K562 (cell line): ENCODE measurements at regions of chr1 and their contacts with region 1.

Region 1: GRCh38 chr1:159780583-159781582 is at the start of gene DUSP23:
- DNase-seq: peak; percentile 95 to 99 (median 98)
- ATAC-seq: peak; percentile 100
- H3K4me3 ChIP-seq: peak within 1 kb of the TSS; percentile 46
- H3K27ac ChIP-seq: peak within 1 kb of the TSS; percentile 58
- H3K4me1 ChIP-seq: peaks cover 0 to 17% of the 10 kb centered on the region in 2 experiments; a peak in 3 of 5 replicates
- H3K27me3 ChIP-seq: peaks cover 0 to 3% of the 10 kb centered on the region in 2 experiments; a peak in 1 of 5 replicates
- CTCF ChIP-seq: peak; percentile 94 to 98 (median 97)
- EP300 ChIP-seq: no peak
- POLR2A ChIP-seq: peak; percentile 68
- RAD21 ChIP-seq: peak; percentile 91 to 92
- polyA plus RNA-seq, gene DUSP23: 1.0 to 3.0 TPM

Region 2: DNA sequence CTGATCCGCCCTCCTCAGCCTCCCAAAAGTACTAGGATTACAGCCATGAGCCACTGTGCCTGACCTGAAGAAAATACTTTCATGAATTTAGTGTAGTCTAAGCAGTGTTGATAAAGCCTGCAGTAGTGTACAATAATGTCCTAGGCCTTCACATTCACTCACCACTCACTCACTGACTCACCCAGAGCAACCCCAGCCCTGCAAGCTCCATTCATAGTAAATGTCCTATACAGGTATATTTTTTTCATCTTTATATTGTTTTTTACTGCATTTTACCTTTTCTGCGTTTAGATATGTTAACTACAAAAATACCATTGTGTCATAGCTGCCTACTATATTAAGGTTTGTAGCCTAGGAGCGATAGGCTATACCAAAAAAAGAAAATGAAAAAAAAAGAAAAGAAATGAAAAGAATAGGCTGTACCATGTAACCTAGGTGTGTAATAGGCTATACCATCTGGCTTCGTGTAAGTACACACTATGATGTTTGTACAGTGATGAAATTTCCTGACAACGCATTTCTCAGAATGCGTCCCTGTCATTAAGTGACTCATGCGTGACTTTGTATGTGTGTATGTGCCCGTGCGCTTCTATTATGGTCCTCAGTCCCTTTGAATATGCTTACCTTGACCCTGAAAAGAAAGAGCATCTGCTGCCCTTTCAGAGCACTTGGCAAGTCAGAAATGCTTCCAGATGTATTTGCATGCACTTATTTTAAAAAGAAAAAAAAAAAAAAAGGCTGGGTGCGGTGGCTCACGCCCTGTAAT is 36.6 kb after region 1 on chr1:
- CTCF ChIA-PET with region 1: interaction called, 4 read pairs
- POLR2A ChIA-PET with region 1: no interaction called
- in situ Hi-C with region 1: no loop called
- intact Hi-C with region 1: loop called (anchors 5 kb)
- DNase-seq: peak in 2 of 4 experiments; percentile 22 to 57
- ATAC-seq: peak; percentile 89
- H3K4me3 ChIP-seq: no peak overlapping the region
- H3K27ac ChIP-seq: no peak overlapping the region
- H3K4me1 ChIP-seq: peaks cover 0 to 9% of the 10 kb centered on the region in 2 experiments; a peak in 2 of 5 replicates
- H3K27me3 ChIP-seq: peaks cover 0 to 18% of the 10 kb centered on the region in 2 experiments; a peak in 4 of 5 replicates
- CTCF ChIP-seq: no peak
- EP300 ChIP-seq: peak; percentile 69
- POLR2A ChIP-seq: no peak
- RAD21 ChIP-seq: no peak

Region 3: GRCh38 chr1:159891275-159892157 is 110.6 kb after region 1 on chr1:
- CTCF ChIA-PET with region 1: interaction called, 12 read pairs
- POLR2A ChIA-PET with region 1: interaction called, 3 read pairs
- in situ Hi-C with region 1: no loop called
- intact Hi-C with region 1: loop called (anchors 5 kb)
- DNase-seq: peak in 1 of 4 experiments; percentile 54
- ATAC-seq: peak; percentile 48
- H3K4me3 ChIP-seq: no peak overlapping the region
- H3K27ac ChIP-seq: no peak overlapping the region
- H3K4me1 ChIP-seq: peaks cover 4 to 24% of the 10 kb centered on the region in 2 experiments; a peak in 4 of 5 replicates
- H3K27me3 ChIP-seq: 0 out of 5 replicates have a peak, but pooled peaks cover 0 to 4% of the 10 kb centered on the region in 2 experiments
- CTCF ChIP-seq: peak; percentile 84 to 99 (median 98)
- EP300 ChIP-seq: no peak
- POLR2A ChIP-seq: no peak
- RAD21 ChIP-seq: peak; percentile 91 to 93

Region 4: GRCh38 chr1:159945483-159946241 is 164.8 kb after region 1 on chr1 and contains the start of gene IGSF9:
- CTCF ChIA-PET with region 1: interaction called, 5 read pairs
- POLR2A ChIA-PET with region 1: no interaction called
- in situ Hi-C with region 1: no loop called
- intact Hi-C with region 1: loop called (anchors 5 kb)
- DNase-seq: peak; percentile 89 to 90 (median 89)
- ATAC-seq: peak; percentile 98
- H3K4me3 ChIP-seq: peak within 1 kb of the TSS; percentile 36
- H3K27ac ChIP-seq: no peak within 1 kb of the TSS
- H3K4me1 ChIP-seq: peaks cover 5 to 13% of the 10 kb centered on the region in 2 experiments; a peak in 3 of 5 replicates
- H3K27me3 ChIP-seq: peaks cover 0 to 38% of the 10 kb centered on the region in 2 experiments; a peak in 4 of 5 replicates
- CTCF ChIP-seq: peak; percentile 63 to 78 (median 72)
- EP300 ChIP-seq: no peak
- POLR2A ChIP-seq: no peak
- RAD21 ChIP-seq: peak; percentile 70 to 75
- polyA plus RNA-seq, gene IGSF9: 0.04 TPM in 1 of 2 experiments, not detected in the other

Region 5: DNA sequence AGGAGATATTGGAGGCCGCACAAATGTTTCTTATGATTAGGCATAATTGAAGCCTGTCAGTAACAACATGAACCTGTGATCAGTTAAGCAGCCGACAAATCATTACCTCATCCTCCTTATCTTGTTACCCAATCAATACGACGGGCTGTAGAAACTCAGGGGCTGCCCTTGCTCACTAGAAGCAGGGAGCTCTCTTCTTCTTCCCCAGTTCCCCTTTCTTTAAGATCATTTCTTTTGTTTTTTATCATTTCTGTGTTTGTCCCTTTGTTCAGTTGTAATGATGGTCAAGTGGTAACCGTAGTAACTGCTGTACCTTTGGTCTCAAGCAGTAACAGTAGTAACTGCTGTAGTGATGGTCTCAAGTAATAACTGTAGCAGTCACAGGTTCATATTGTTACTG is 1710.6 kb after region 1 on chr1:
- CTCF ChIA-PET with region 1: no interaction called
- POLR2A ChIA-PET with region 1: no interaction called
- in situ Hi-C with region 1: no loop called
- intact Hi-C with region 1: no loop called
- DNase-seq: peak in 2 of 4 experiments; percentile 39 to 45
- ATAC-seq: no peak
- H3K4me3 ChIP-seq: no peak overlapping the region
- H3K27ac ChIP-seq: no peak overlapping the region
- H3K4me1 ChIP-seq: peaks cover 0 to 57% of the 10 kb centered on the region in 2 experiments
- H3K27me3 ChIP-seq: no peaks in the 10 kb centered on the region
- CTCF ChIP-seq: no peak
- EP300 ChIP-seq: no peak; the same call in 1 of the 2 replicates
- POLR2A ChIP-seq: no peak
- RAD21 ChIP-seq: no peak